ENCODE measurements at regions of chr3 and their contacts with region 1.

Region 1: GRCh38 chr3:73086071-73086494 is 24.6 kb downstream of the EBLN2 start:
- DNase-seq: peak in 1 of 2 donors; percentile 26
- ATAC-seq: peak; percentile 57 to 88 (median 79)
- H3K4me3 ChIP-seq: no peak overlapping the region
- H3K27ac ChIP-seq: no peak overlapping the region
- H3K4me1 ChIP-seq: no peaks in the 10 kb centered on the region
- H3K27me3 ChIP-seq: no peaks in the 10 kb centered on the region
- CTCF ChIP-seq: peak; percentile 82

Region 2: DNA sequence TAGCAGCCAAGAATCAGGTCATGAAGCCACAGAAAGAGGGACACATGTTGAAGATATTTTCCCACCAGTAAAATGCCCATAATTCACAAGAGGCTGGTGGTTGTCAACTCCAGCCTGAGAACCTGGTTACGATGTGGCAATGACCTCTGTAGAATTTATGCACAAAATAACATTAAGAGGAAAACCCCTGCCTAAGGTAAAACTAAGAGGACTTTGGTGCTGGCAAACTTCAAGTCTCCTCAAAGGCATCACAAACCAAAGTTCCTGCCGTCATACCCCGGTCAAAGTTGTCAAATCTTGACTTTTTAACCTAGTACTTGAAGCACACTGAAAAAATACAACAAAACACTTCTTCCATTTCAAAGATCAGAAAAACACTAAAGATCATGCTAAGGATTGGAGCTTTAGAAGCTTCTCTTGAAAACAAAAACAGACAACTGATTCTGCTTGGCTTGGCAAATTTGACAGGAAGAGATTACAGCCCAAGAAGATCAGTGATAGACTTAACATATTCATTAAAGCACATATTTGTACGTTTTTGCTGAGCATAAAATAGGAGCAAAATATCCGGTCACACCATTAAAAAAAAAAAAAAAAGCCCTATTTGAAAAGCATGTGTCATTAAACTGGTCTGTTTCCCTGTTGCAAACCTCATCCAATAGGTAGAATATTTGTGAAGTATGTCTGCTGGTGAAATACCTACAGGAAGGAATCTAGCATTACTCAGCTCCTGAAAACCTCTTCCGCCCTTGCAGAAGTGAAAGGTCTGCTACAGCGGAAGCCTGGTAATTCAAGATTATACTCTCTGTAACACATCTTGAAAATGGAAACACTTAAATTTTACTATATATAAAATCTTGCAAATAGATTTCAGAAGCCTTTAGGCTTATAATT is 1383.7 kb before region 1 on chr3:
- intact Hi-C with region 1: no loop called
- DNase-seq: no peak
- ATAC-seq: no peak
- H3K4me3 ChIP-seq: no peak overlapping the region
- H3K27ac ChIP-seq: no peak overlapping the region
- H3K4me1 ChIP-seq: peaks cover 4% of the 10 kb centered on the region
- H3K27me3 ChIP-seq: no peaks in the 10 kb centered on the region
- CTCF ChIP-seq: no peak

Region 3: DNA sequence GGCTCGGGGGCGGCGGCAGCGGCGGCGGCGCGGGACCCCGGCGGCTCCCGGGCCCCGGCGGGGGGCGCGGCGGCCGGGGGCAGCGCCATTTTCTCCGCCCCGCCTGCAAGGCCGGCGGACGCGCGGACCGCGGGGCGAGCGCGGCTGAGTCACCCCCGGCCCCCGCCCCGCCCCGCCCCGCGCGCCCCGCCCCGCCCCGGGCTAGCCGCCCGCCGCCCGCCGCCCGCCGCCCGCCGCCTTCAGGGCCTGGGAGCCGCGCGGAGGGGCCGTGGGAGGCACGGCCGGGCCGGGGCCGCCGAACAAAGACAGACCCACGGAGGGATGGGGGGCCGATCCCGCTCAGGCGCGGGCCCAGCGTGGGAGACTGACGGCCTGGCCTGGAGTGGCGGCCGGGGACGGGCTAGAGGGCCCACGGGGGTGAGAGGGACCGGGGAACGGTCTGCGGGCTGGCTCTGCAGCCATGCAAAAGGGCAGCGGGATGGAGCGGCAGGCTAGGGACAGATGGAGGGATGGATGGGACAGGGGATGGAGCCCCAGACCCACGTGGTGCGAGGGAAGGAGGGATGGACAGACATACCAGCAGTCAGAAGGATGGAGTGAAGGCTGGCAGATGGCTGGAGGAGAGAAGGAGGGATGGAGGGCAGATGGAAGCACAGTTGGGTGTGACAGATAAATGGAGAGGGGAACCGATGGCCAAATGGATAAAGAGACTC is 1360.6 kb before region 1 on chr3 and contains the start of gene EIF4E3:
- intact Hi-C with region 1: loop called (anchors 10 kb)
- DNase-seq: peak; percentile 47 to 60
- ATAC-seq: peak; percentile 58 to 69 (median 65)
- H3K4me3 ChIP-seq: peak within 1 kb of the TSS; percentile 92
- H3K27ac ChIP-seq: peak within 1 kb of the TSS; percentile 82
- H3K4me1 ChIP-seq: peaks cover 15% of the 10 kb centered on the region
- H3K27me3 ChIP-seq: no peaks in the 10 kb centered on the region
- CTCF ChIP-seq: no peak
- total RNA-seq, gene EIF4E3: 38.5 to 57.3 (median 49.8) TPM

Region 4: GRCh38 chr3:71734883-71735282 is 1351.2 kb before region 1 on chr3:
- intact Hi-C with region 1: loop called in 1 of 2 experiments (anchors 10 kb)
- DNase-seq: no peak
- ATAC-seq: no peak
- H3K4me3 ChIP-seq: no peak overlapping the region
- H3K27ac ChIP-seq: no peak overlapping the region
- H3K4me1 ChIP-seq: no peaks in the 10 kb centered on the region
- H3K27me3 ChIP-seq: no peaks in the 10 kb centered on the region
- CTCF ChIP-seq: no peak

Region 5: GRCh38 chr3:71875461-71875947 is 1210.6 kb before region 1 on chr3:
- intact Hi-C with region 1: loop called in 1 of 2 experiments (anchors 5 kb)
- DNase-seq: peak; percentile 71 to 79
- ATAC-seq: peak; percentile 88 to 98 (median 92)
- H3K4me3 ChIP-seq: no peak overlapping the region
- H3K27ac ChIP-seq: no peak overlapping the region
- H3K4me1 ChIP-seq: no peaks in the 10 kb centered on the region
- H3K27me3 ChIP-seq: no peaks in the 10 kb centered on the region
- CTCF ChIP-seq: peak; percentile 84

Region 6: DNA sequence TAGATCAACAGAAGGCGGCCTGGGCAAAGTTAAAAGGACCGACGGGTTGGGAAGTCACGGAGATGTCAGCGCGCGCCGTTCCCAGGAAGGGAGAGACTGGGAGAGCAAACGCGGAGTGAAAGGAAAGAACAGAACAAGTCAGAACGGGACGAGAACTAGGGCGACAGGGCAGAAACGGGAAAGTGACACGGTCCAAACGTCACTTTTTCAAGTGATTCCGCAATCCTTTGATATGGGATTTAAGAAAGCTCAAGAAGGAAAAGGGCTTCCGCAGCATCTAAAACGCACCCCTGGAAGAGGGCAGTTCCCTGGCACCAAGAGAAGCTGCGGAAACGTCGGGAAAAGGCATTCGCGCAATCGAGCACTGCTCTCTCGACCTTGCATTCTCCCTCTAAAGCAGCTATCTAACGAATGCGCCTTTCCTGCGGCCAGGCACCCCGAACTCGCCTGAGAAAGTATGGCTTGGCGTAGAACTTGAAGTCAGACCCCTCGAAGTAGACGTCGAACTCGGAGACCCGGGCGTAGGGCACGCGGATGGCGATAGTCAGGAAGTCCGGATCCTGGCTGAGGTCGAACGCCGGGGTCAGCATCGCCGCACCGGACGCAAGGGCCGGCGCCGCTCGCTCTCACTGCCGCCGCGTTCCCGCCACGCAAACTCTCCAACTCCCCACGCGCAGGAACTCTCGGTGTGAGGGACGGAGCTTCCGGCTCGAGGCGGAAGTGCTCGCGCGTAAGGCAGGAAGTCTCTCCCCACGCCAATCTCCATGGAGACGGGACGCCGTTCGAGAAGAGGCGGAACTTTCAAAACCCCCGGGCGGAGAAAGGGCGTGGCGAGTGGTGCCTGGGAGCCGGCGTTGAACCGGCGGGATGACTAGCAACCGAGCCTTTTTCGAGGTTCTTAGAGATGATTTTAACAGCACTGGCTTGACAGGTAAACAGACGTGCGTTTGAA is 238.1 kb before region 1 on chr3 and contains the start of gene SHQ1:
- intact Hi-C with region 1: loop called (anchors 5 kb)
- DNase-seq: peak; percentile 96 to 98
- ATAC-seq: peak; percentile 98 to 99 (median 99)
- H3K4me3 ChIP-seq: peak within 1 kb of the TSS; percentile 89
- H3K27ac ChIP-seq: peak within 1 kb of the TSS; percentile 84
- H3K4me1 ChIP-seq: peaks cover 31% of the 10 kb centered on the region
- H3K27me3 ChIP-seq: no peaks in the 10 kb centered on the region
- CTCF ChIP-seq: no peak
- total RNA-seq, gene SHQ1: 6.2 to 20.6 (median 18.3) TPM

Region 7: GRCh38 chr3:72938471-72939265 is 147.4 kb before region 1 on chr3:
- intact Hi-C with region 1: loop called (anchors 2 to 10 kb)
- DNase-seq: peak; percentile 37 to 57
- ATAC-seq: peak; percentile 88 to 98 (median 94)
- H3K4me3 ChIP-seq: no peak overlapping the region
- H3K27ac ChIP-seq: no peak overlapping the region
- H3K4me1 ChIP-seq: peaks cover 5% of the 10 kb centered on the region
- H3K27me3 ChIP-seq: no peaks in the 10 kb centered on the region
- CTCF ChIP-seq: peak; percentile 61

Region 8: DNA sequence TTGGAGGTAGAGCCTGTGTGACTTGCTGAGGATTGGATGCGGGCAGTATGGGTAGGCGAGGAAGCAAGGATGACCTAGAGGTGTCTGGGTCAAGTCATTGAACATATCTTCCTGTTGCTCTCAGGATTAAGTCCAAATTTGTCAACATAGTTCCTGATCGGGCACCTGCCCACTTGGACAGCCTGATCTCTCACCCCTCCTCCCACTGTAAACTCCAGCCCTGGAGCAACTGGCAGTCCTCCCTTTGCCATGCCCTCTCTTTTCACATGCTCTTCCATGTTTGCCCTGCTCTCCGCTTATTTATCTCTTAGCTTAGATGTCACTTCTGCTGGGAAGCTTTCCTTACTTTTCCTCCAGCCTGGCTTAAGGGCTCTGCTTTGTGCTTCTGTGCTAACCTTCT is 137.1 kb before region 1 on chr3:
- intact Hi-C with region 1: loop called in 1 of 2 experiments (anchors 10 kb)
- DNase-seq: no peak
- ATAC-seq: no peak
- H3K4me3 ChIP-seq: no peak overlapping the region
- H3K27ac ChIP-seq: no peak overlapping the region
- H3K4me1 ChIP-seq: no peaks in the 10 kb centered on the region
- H3K27me3 ChIP-seq: no peaks in the 10 kb centered on the region
- CTCF ChIP-seq: no peak

Region 9: GRCh38 chr3:73024836-73025235 is 61.2 kb before region 1 on chr3:
- intact Hi-C with region 1: no loop called
- DNase-seq: no peak
- ATAC-seq: no peak
- H3K4me3 ChIP-seq: no peak overlapping the region
- H3K27ac ChIP-seq: no peak overlapping the region
- H3K4me1 ChIP-seq: peaks cover 65% of the 10 kb centered on the region
- H3K27me3 ChIP-seq: no peaks in the 10 kb centered on the region
- CTCF ChIP-seq: no peak

Measured in psoas muscle (tissue), 8 donors.